ENCODE measurements at regions of chr11 and their contacts with region 1.

Region 1: GRCh38 chr11:114192841-114193389 is 103.3 kb upstream of the NNMT start:
- DNase-seq: no peak
- ATAC-seq: no peak
- H3K4me3 Mint-ChIP-seq: no peak overlapping the region
- H3K27ac Mint-ChIP-seq: no peak overlapping the region
- H3K4me1 Mint-ChIP-seq: peaks cover 33% of the 10 kb centered on the region
- H3K27me3 Mint-ChIP-seq: no peaks in the 10 kb centered on the region

Region 2: DNA sequence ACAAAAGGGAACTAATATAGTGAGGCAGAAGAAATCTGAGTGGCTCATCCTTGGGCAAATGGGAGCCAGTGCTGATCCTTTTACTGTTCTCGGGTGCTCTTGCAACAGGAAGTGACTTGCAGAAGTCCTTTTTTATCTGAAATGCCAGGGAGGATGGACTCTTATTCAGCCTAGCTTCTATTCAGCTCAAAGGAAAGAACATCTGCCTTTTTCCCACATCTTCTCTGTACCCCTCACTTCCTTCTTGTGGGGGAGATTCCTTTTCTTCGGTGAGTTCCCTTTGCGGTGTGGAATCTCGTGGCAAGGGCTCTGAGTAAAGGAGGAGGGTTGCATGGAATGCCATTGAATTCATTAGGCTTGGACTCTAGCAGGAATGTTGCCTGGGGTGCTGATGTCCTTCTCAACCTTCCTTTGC is 57.2 kb before region 1 on chr11:
- POLR2A ChIA-PET with region 1: no interaction called
- DNase-seq: no peak
- ATAC-seq: no peak
- H3K4me3 Mint-ChIP-seq: no peak overlapping the region
- H3K27ac Mint-ChIP-seq: no peak overlapping the region
- H3K4me1 Mint-ChIP-seq: peaks cover 31% of the 10 kb centered on the region
- H3K27me3 Mint-ChIP-seq: peaks cover 3% of the 10 kb centered on the region

Region 3: DNA sequence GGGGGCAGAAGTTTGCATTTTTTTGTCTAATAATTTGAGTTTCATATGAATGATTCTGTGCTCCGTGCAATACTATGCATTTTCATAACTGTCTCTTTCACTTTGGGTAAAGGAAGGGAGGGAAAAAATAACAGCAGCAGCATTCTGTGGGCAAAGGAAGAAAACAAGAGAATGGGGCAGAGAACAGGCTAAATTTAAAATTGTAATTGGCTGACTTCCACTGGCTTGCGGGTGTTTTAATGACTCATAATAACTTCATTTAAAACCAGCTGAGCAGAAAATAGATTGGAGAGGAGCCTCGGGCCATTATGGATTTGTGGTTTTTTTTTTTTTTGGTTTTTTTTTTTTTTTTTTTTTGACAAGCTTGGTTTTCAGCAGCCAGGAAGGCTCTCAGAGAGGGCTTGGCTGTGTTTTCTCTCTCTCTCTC is 26.0 kb before region 1 on chr11:
- POLR2A ChIA-PET with region 1: interaction called, 10 read pairs
- DNase-seq: no peak
- ATAC-seq: peak; percentile 41
- H3K4me3 Mint-ChIP-seq: peak overlapping the region; percentile 54
- H3K27ac Mint-ChIP-seq: peak overlapping the region; percentile 79
- H3K4me1 Mint-ChIP-seq: peaks cover 53% of the 10 kb centered on the region
- H3K27me3 Mint-ChIP-seq: no peaks in the 10 kb centered on the region

Region 4: GRCh38 chr11:114243461-114244372 is 50.8 kb after region 1 on chr11:
- POLR2A ChIA-PET with region 1: no interaction called
- DNase-seq: no peak
- ATAC-seq: no peak
- H3K4me3 Mint-ChIP-seq: no peak overlapping the region
- H3K27ac Mint-ChIP-seq: no peak overlapping the region
- H3K4me1 Mint-ChIP-seq: no peaks in the 10 kb centered on the region
- H3K27me3 Mint-ChIP-seq: no peaks in the 10 kb centered on the region